Colonic mucosa (tissue), 4 donors: ENCODE measurements at regions of chr12 and their contacts with region 1.

Region 1: GRCh38 chr12:54294152-54294952 is 6.5 kb downstream of the NFE2 start:
- DNase-seq: peak; percentile 85
- H3K4me3 ChIP-seq: no peak overlapping the region
- H3K27ac ChIP-seq: no peak overlapping the region
- H3K4me1 ChIP-seq: no peaks in the 10 kb centered on the region
- H3K27me3 ChIP-seq: no peaks in the 10 kb centered on the region
- CTCF ChIP-seq: peak; percentile 75

Region 2: GRCh38 chr12:54324617-54325441 is 30.5 kb after region 1 on chr12 and contains the start of gene COPZ1:
- intact Hi-C with region 1: loop called (anchors 5 kb)
- DNase-seq: peak; percentile 97
- H3K4me3 ChIP-seq: peak within 1 kb of the TSS; percentile 78
- H3K27ac ChIP-seq: peak within 1 kb of the TSS; percentile 79
- H3K4me1 ChIP-seq: peaks cover 20% of the 10 kb centered on the region
- H3K27me3 ChIP-seq: no peaks in the 10 kb centered on the region
- CTCF ChIP-seq: peak; percentile 75
- total RNA-seq, gene COPZ1: 164 to 173 TPM